Common myeloid progenitor, CD34-positive (primary cell): ENCODE measurements at regions of chr1 and their contacts with region 1.

Region 1: GRCh38 chr1:32773018-32773763 is 44.0 kb downstream of the YARS1 start:
- DNase-seq: peak; percentile 71 to 79 (median 72)
- H3K4me3 ChIP-seq: no peak overlapping the region
- H3K27ac ChIP-seq: no peak overlapping the region
- H3K4me1 ChIP-seq: peaks cover 0 to 27% (median 18%) of the 10 kb centered on the region in 4 experiments
- H3K27me3 ChIP-seq: no peaks in the 10 kb centered on the region

Region 2: DNA sequence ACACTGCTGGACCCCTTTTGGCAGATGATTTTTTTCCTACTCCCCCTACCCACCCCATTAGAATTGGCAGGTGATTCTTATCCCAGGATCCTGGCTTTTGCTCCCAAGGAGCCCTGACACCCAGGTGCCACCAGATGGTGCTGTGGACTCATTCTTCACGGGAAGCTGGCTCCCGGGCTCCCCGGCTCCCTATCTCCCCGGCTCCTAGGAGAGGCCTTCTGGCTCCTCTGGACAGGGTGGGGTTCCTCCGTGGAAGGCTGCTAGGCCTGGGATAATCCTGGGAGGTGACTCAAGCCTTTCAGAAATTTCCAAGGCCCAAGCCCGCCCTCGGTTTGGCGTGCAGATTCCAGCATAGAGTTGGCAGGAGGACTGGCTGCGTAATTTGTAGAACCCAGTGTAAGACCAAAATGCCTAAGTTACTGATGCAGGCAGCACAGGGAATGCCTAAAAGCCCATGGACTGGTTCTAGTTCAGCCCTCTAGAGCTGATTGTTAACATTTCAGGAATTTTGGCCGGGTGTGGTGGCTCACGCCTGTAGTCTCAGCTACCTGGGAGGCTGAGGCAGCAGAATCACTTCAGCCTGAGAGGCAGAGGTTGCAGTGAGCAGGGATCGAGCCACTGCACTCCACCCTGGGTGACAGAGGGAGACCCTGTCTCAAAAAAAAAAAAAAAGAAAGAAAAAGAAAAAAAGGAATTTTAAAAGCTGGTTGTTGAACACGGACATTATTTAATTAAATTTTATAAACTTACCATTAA is 372.1 kb before region 1 on chr1:
- CTCF ChIA-PET with region 1: interaction called, 18 read pairs
- POLR2A ChIA-PET with region 1: interaction called, 4 read pairs
- DNase-seq: peak; percentile 39 to 54 (median 40)
- H3K4me3 ChIP-seq: peak overlapping the region in 3 of 7 experiments; percentile 13 to 52 (median 45)
- H3K27ac ChIP-seq: no peak overlapping the region
- H3K4me1 ChIP-seq: peaks cover 0 to 3% (median 1%) of the 10 kb centered on the region in 4 experiments
- H3K27me3 ChIP-seq: peaks cover 0 to 3% (median 0%) of the 10 kb centered on the region in 5 experiments

Region 3: GRCh38 chr1:32716312-32717148 is 56.7 kb before region 1 on chr1:
- CTCF ChIA-PET with region 1: interaction called, 210 read pairs
- POLR2A ChIA-PET with region 1: interaction called, 5 read pairs
- DNase-seq: peak; percentile 42 to 52 (median 51)
- H3K4me3 ChIP-seq: peak overlapping the region in 2 of 7 experiments; percentile 28 to 60
- H3K27ac ChIP-seq: peak overlapping the region in 1 of 2 experiments; percentile 44
- H3K4me1 ChIP-seq: peaks cover 4 to 32% (median 22%) of the 10 kb centered on the region in 4 experiments
- H3K27me3 ChIP-seq: no peaks in the 10 kb centered on the region

Region 4: DNA sequence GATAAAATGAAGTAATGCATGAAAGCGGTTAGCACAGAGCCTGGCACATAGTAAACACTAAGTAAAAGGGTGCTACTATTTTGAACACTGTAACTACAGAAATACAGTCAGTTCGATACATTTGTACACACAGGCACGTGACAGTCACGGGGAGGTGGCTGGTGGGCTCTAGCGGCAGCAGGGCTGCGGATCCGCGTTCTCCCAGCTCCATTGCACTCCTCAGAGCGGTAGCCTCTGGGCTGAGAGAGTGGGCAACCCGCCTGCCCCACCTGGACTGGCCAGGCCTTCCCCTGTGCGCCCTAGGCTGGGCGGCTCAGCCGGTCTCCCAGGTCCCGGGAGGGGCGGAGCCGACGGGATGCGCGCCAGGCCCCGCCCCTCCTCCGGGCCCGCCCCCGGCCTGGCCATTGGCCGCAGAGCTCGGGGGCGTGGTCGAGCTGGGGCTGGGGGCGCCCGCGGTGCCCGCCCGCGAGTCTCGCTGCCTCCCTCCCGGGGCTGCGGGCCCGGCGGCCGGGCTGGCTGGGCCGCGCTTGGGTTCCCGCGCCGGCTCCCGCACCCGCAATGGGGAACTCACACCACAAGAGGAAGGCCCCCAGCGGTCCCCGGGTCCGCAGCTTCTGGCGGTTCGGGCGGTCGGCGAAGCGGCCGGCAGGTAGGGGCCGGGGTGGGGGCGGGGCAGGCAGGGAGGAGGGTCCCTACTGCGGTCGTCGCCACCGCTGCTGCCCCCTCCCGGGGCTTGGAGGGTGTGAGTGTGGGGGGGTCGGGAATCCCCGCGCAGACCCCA is 19.5 kb before region 1 on chr1:
- CTCF ChIA-PET with region 1: interaction called, 37 read pairs
- POLR2A ChIA-PET with region 1: interaction called, 5 read pairs
- DNase-seq: peak; percentile 58 to 83 (median 76)
- H3K4me3 ChIP-seq: peak overlapping the region; percentile 23 to 72 (median 64)
- H3K27ac ChIP-seq: peak overlapping the region in 1 of 2 experiments; percentile 35
- H3K4me1 ChIP-seq: peaks cover 0 to 41% (median 24%) of the 10 kb centered on the region in 4 experiments
- H3K27me3 ChIP-seq: no peaks in the 10 kb centered on the region

Region 5: GRCh38 chr1:32786856-32787255 is 13.7 kb after region 1 on chr1:
- CTCF ChIA-PET with region 1: interaction called, 26 read pairs
- POLR2A ChIA-PET with region 1: interaction called, 4 read pairs
- DNase-seq: peak; percentile 28 to 52 (median 51)
- H3K4me3 ChIP-seq: no peak overlapping the region
- H3K27ac ChIP-seq: no peak overlapping the region
- H3K4me1 ChIP-seq: no peaks in the 10 kb centered on the region
- H3K27me3 ChIP-seq: no peaks in the 10 kb centered on the region